Activated T-helper 1 cell treated with anti-CD3 and anti-CD28 coated beads, Interleukin-12 subunit alpha, Interleukin-12 subunit beta, Interleukin-2, Interleukin-4 antibody, amounts not matched to agents 30 ng/mL and 10 ng/mL and 1 ng/mL, durations not matched to agents 14 hours and 24 hours and 36 hours (primary cell): ENCODE measurements at regions of chr2 and their contacts with region 1.

Region 1: DNA sequence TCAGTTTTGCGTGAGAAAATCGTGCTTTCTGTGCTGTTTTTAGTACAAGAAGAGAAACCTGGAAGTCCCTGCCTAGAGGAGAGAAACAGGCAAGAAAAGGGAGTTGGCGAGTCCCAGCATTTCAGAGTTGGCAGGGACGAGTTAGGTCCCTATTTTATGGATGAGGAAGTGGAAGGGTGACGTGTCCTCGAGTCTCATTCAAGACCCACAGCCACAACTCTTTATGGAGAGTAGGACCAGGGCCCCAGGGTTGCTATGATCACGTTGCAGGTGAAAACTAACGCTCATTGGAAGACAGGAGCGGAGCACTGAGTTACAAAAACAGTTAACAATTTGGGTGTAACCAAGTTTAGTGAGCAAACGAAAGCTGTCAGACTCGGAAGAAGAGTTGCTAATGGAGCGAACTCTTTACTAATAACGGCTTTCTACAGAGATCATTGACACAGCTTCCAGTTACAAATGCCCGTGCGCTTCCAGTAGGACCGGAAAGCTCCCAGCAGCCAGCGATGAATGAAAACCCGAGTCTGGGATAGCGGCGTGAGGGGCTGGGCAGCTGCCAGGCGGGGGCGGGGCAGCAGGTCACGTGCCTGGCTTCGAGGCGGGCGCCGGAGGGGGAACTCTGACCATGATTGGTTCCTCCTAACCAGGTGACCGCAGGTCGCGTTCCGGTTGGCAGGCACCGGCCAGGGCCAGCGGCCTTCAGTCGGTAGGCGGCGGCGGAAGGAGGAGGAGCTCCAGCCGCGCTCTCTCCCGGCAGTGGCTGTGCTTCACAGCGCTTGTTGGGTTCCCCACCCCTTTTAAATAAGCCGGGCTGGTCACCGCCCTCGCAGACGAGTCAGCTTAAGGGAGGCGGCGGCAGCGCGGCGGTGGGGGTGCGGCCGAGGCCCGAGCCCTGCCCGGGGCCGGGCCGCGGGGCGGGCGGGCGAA is at the start of gene CCNYL1:
- DNase-seq: peak; percentile 98
- H3K4me3 Mint-ChIP-seq: peak within 1 kb of the TSS; percentile 96
- H3K27ac Mint-ChIP-seq: peak within 1 kb of the TSS; percentile 76
- H3K4me1 Mint-ChIP-seq: peaks cover 36% of the 10 kb centered on the region
- H3K27me3 Mint-ChIP-seq: no peaks in the 10 kb centered on the region
- total RNA-seq, gene CCNYL1: 6.8 and 8.7 TPM in 2 replicates

Region 2: DNA sequence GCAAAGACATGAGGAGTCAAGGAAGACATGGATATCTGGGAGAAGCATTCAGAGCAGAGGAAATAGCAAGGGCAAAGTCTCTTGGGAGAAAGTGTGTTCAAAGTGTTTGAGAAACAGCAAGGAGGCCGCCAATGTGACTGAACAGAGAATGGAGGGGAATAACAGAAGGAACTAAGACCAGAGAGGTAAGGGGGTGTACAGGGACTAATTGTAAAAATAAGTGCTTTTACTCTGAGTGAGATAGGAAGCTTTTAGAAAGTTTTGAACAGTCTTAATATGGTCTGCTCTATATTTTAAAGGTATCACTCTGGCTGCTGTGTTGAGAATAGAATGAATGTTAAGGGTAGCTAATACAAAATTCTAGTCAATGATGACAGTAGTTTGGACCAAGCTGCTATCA is 188.1 kb before region 1 on chr2:
- intact Hi-C with region 1: no loop called
- DNase-seq: no peak
- H3K4me3 Mint-ChIP-seq: no peak overlapping the region
- H3K27ac Mint-ChIP-seq: no peak overlapping the region
- H3K4me1 Mint-ChIP-seq: peaks cover 40% of the 10 kb centered on the region
- H3K27me3 Mint-ChIP-seq: no peaks in the 10 kb centered on the region

Region 3: DNA sequence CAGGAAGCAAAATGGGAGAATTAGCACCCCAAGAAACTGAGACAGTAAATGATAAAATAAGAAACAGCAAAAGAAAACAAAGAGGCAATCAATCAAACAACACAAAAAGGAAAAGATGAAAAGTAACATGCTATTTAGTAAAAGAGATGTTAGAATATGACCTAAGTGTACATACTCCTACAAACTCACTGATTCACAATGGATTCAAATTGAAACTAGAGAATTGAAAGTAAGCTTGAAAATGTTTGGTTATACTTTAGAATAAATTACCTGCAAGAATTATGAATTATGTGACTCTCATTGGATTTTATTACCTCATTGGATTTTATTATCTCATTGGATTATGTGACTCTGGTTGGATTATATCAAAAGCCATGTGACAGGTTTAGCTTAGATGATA is 22.5 kb before region 1 on chr2:
- intact Hi-C with region 1: loop called (anchors 2 kb)
- DNase-seq: no peak
- H3K4me3 Mint-ChIP-seq: no peak overlapping the region
- H3K27ac Mint-ChIP-seq: no peak overlapping the region
- H3K4me1 Mint-ChIP-seq: peaks cover 6% of the 10 kb centered on the region
- H3K27me3 Mint-ChIP-seq: no peaks in the 10 kb centered on the region

Region 4: DNA sequence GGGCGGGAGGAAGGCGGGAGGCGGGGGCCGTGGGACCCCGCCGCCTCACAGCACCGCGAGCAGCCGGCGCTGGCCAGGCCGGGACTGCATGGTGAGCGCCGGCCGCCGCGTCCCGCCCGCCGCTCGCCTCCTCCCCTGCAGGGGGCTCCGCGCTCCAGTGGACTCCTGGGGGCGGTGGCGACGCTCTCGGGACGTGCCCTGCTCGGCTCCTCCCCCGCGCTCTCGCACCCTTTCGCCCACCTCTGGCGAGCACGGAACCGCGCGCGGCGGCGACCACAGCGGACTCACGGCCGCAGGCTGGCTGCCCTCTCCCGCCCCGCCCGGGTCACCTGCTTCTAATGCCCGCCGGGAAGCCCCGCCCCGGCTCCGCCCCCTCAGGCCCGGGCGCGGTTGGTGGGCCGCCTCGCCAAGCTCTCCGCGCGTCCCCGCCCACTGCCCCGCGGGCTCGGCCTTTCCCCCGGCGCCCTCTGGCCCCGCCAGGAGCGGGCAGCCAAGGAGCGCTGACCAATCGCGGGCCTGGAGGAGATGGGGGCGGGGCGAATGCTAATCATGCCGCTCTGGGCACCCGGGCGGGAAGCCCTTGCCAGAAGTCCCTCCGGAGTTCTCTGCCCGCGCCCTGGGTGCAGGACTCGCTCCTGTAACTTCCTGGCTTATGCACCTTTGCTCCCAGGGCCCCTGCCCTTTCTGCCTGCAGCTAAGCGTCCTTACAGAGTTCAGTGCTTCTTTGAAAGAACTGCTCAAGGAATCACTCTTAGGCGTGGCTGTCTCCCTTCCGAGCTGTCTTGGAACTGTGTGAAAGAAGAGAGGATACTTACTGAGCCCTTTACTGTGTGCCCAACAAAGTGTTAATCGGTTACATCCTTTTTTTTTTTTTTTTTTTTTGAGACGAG is 58.8 kb after region 1 on chr2 and contains the start of gene FZD5:
- intact Hi-C with region 1: loop called (anchors 1 kb)
- DNase-seq: peak; percentile 77
- H3K4me3 Mint-ChIP-seq: peak within 1 kb of the TSS; percentile 86
- H3K27ac Mint-ChIP-seq: peak within 1 kb of the TSS; percentile 31
- H3K4me1 Mint-ChIP-seq: peaks cover 25% of the 10 kb centered on the region
- H3K27me3 Mint-ChIP-seq: peaks cover 48% of the 10 kb centered on the region
- total RNA-seq, gene FZD5: 0.86 and 1.0 TPM in 2 replicates

Region 5: GRCh38 chr2:208025037-208025813 is 314.1 kb after region 1 on chr2 and contains the start of gene PLEKHM3:
- intact Hi-C with region 1: loop called (anchors 1 kb)
- DNase-seq: peak; percentile 73
- H3K4me3 Mint-ChIP-seq: peak within 1 kb of the TSS; percentile 95
- H3K27ac Mint-ChIP-seq: peak within 1 kb of the TSS; percentile 79
- H3K4me1 Mint-ChIP-seq: peaks cover 17% of the 10 kb centered on the region
- H3K27me3 Mint-ChIP-seq: no peaks in the 10 kb centered on the region
- total RNA-seq, gene PLEKHM3: 6.4 and 7.3 TPM in 2 replicates